ENCODE measurements at regions of chr3 and their contacts with region 1.

Region 1: GRCh38 chr3:15291589-15292541 is 40.5 kb downstream of the SH3BP5 start:
- DNase-seq: no peak
- H3K4me3 ChIP-seq: no peak overlapping the region
- H3K27ac ChIP-seq: peak overlapping the region; percentile 80 to 92
- H3K4me1 ChIP-seq: peaks cover 31 to 50% of the 10 kb centered on the region in 2 donors
- H3K27me3 ChIP-seq: no peaks in the 10 kb centered on the region
- CTCF ChIP-seq: no peak

Region 2: GRCh38 chr3:15276028-15276724 is 15.7 kb before region 1 on chr3:
- intact Hi-C with region 1: no loop called
- DNase-seq: peak in 1 of 2 donors; percentile 45
- H3K4me3 ChIP-seq: no peak overlapping the region
- H3K27ac ChIP-seq: no peak overlapping the region
- H3K4me1 ChIP-seq: peaks cover 0 to 4% of the 10 kb centered on the region in 2 donors
- H3K27me3 ChIP-seq: no peaks in the 10 kb centered on the region
- CTCF ChIP-seq: no peak

Region 3: GRCh38 chr3:15319575-15319974 is 27.7 kb after region 1 on chr3:
- intact Hi-C with region 1: loop called (anchors 2 kb)
- DNase-seq: peak in 1 of 2 donors; percentile 87
- H3K4me3 ChIP-seq: no peak overlapping the region
- H3K27ac ChIP-seq: peak overlapping the region; percentile 84 to 87
- H3K4me1 ChIP-seq: peaks cover 12 to 71% of the 10 kb centered on the region in 2 donors
- H3K27me3 ChIP-seq: no peaks in the 10 kb centered on the region
- CTCF ChIP-seq: no peak

Region 4: GRCh38 chr3:15332405-15333098 is 40.7 kb after region 1 on chr3 and contains the start of gene SH3BP5:
- intact Hi-C with region 1: loop called (anchors 2 kb)
- DNase-seq: peak in 1 of 2 donors; percentile 84
- H3K4me3 ChIP-seq: peak within 1 kb of the TSS; percentile 95 to 99
- H3K27ac ChIP-seq: peak within 1 kb of the TSS; percentile 92 to 94
- H3K4me1 ChIP-seq: peaks cover 0 to 16% of the 10 kb centered on the region in 2 donors
- H3K27me3 ChIP-seq: no peaks in the 10 kb centered on the region
- CTCF ChIP-seq: peak; percentile 62 to 92 (median 83)
- total RNA-seq, gene SH3BP5: 65.9 TPM

Measured in ascending aorta (tissue), 2 donors.